ENCODE measurements at regions of chr7 and their contacts with region 1.

Region 1: DNA sequence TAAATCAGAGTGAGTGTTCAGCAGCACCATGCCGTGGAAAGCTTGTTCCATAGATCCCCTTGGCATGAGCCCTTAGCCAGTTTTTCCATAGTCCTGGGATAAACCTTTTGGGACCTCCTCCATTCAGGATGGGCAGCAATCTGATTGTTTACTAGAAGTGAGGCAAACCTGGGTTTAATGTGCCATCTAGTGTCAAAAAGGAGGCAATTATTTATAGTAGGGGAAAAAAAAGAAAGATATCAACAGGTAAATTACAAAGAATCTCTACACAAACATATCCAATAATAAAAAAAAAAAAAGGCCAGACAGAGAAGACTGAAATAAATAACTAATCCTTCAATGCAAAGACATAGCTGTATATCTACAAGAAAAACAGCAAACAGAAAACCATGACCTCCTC is 229.0 kb upstream of the STK17A start:
- DNase-seq: no peak

Region 2: GRCh38 chr7:42479816-42480633 is 873.9 kb before region 1 on chr7:
- intact Hi-C with region 1: loop called in 1 of 2 experiments (anchors 5 kb)
- DNase-seq: no peak

Measured in posterior vena cava (tissue), 2 donors.